IMR-90 (cell line): ENCODE measurements at regions of chr12 and their contacts with region 1.

Region 1: DNA sequence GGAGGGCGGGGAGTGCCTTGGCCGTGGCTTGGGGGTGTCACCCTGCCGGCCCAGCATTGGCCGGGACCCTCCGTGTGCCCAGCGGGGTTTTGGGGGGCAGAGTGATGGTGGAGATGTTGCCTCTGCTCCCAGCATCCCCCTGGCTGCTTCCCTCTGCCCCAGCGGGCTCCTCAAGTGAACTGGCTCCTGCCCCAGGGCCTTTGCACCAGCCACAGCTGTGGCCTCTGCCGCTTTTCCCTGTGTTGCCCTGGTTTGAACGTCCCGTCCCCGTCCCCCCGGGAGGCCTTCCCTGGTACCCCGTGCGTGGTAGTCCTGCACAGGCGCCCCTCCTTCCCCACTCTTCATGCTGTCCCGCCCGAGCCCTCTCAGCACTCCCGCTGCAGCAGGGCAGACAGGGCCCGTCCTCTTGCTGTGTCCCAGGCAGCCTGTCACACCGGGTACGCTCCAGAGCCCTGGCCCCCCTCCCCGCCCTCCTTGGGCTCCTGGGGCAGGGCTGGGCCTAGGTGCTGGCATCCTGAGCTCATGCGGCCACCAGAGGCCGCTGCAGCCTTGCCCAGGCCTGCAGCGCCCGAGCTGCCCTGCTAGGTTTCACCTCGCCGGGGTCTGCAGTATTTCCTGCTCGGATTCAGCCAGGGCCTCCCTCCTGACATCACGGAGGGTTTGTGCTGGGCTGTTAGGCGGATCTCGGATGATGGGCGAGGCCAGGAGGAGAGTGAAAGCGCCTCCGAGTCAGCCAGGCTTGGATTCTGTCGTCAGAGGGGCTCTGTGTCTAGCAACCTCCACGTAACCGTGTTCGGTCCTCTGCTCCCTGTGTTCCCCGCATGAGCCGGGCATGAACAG is 9.5 kb downstream of the NOC4L start:
- DNase-seq: peak; percentile 61
- ATAC-seq: peak; percentile 99
- H3K4me3 ChIP-seq: no peak overlapping the region
- H3K27ac ChIP-seq: no peak overlapping the region
- H3K4me1 ChIP-seq: no peaks in the 10 kb centered on the region
- H3K27me3 ChIP-seq: no peaks in the 10 kb centered on the region
- CTCF ChIP-seq: peak; percentile 93
- POLR2A ChIP-seq: 0 out of 2 replicates have a peak, but pooled peaks have one; percentile 37
- RAD21 ChIP-seq: peak; percentile 97

Region 2: GRCh38 chr12:132218915-132219314 is 65.2 kb after region 1 on chr12:
- CTCF ChIA-PET with region 1: interaction called, 3 read pairs
- POLR2A ChIA-PET with region 1: no interaction called
- dilution Hi-C with region 1: no loop called
- in situ Hi-C with region 1: no loop called
- intact Hi-C with region 1: loop called (anchors 1 kb)
- DNase-seq: no peak
- ATAC-seq: no peak; the same call in 1 of the 2 replicates
- H3K4me3 ChIP-seq: no peak overlapping the region
- H3K27ac ChIP-seq: no peak overlapping the region
- H3K4me1 ChIP-seq: no peaks in the 10 kb centered on the region; the same call in 1 of the 2 replicates
- H3K27me3 ChIP-seq: no peaks in the 10 kb centered on the region; the same call in 1 of the 2 replicates
- CTCF ChIP-seq: 0 out of 2 replicates have a peak, but pooled peaks have one; percentile 15
- POLR2A ChIP-seq: no peak
- RAD21 ChIP-seq: no peak

Region 3: GRCh38 chr12:132523576-132524331 is 370.0 kb after region 1 on chr12:
- CTCF ChIA-PET with region 1: no interaction called
- POLR2A ChIA-PET with region 1: no interaction called
- dilution Hi-C with region 1: no loop called
- in situ Hi-C with region 1: no loop called
- intact Hi-C with region 1: loop called (anchors 1 kb)
- DNase-seq: peak; percentile 24
- ATAC-seq: peak; percentile 89
- H3K4me3 ChIP-seq: no peak overlapping the region
- H3K27ac ChIP-seq: no peak overlapping the region
- H3K4me1 ChIP-seq: no peaks in the 10 kb centered on the region
- H3K27me3 ChIP-seq: no peaks in the 10 kb centered on the region
- CTCF ChIP-seq: peak; percentile 68
- POLR2A ChIP-seq: no peak
- RAD21 ChIP-seq: peak; percentile 64